Caco-2 (cell line): ENCODE measurements at regions of chr9 and their contacts with region 1.

Region 1: GRCh38 chr9:110058304-110058953 is 149.5 kb downstream of the C9orf152 start:
- DNase-seq: peak; percentile 78 to 79
- H3K4me3 ChIP-seq: no peak overlapping the region
- H3K4me3 Mint-ChIP-seq: no peak overlapping the region
- H3K27ac Mint-ChIP-seq: no peak overlapping the region
- H3K4me1 ChIP-seq: peaks cover 12% of the 10 kb centered on the region; the same call in 1 of the 2 replicates
- H3K4me1 Mint-ChIP-seq: peaks cover 18% of the 10 kb centered on the region
- H3K27me3 ChIP-seq: no peaks in the 10 kb centered on the region
- H3K27me3 Mint-ChIP-seq: no peaks in the 10 kb centered on the region
- CTCF ChIP-seq: peak; percentile 68 to 69

Region 2: DNA sequence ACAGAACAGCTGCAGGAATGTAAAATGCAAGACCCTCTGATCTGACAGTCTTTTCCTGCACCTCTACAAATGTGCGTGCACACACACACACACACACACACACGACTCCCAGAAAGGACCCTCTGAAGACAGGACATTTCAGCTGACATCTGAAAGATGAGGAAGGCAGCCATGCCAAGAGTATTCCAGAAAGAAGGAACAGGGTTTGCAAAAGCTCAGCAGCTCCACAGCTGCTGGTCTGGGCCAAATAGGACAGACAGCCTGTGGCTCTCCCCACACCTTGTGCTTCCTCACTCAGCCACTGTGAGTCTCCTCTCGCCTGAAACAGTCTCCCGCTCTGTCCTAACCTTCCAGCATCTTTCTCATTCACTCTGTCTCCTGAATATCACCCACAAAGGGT is 89.4 kb before region 1 on chr9:
- CTCF ChIA-PET with region 1: interaction called, 7 read pairs
- POLR2A ChIA-PET with region 1: no interaction called
- intact Hi-C with region 1: loop called (anchors 1 kb)
- DNase-seq: peak; percentile 54 to 58
- H3K4me3 ChIP-seq: no peak overlapping the region
- H3K4me3 Mint-ChIP-seq: no peak overlapping the region
- H3K27ac Mint-ChIP-seq: no peak overlapping the region
- H3K4me1 ChIP-seq: no peaks in the 10 kb centered on the region
- H3K4me1 Mint-ChIP-seq: no peaks in the 10 kb centered on the region
- H3K27me3 ChIP-seq: no peaks in the 10 kb centered on the region
- H3K27me3 Mint-ChIP-seq: no peaks in the 10 kb centered on the region
- CTCF ChIP-seq: peak in 1 of 2 experiments; percentile 37

Region 3: DNA sequence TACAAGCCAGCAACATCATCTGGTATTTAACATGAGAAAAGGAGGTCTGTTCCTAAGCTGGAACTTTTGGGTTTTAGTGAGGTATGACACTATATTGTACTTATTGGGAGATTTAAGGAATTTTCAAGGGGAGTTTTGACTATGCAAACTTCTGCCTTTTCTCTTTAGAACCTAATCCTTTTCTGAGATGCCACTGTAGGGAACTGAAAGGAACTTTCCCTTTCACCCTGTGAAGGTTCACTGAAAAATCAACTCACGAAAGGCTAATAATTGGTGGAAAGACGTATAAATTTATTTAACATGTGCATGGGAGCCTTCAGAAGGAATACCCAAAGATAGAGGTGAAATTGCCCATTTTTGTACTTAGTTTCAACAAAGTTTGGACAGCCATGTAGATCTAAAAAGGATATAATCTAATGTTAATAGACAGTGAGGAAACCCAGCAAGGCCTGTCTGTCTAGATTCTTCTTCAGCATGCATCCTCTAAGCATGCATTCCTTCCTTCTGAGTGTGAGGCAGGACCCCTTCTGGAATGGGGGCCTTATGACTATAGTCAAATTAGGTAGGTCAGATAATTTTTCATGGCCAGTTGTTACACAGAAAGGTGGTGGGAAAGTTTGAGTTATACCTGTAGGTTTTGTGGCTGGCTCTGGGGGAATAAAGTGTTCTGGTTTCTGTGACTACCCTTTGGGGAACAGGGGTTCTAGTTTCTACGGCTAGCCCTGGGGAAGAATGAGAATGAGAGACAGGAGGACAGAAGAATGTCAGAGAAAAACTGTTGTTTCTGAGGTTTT is 50.8 kb before region 1 on chr9:
- CTCF ChIA-PET with region 1: no interaction called
- POLR2A ChIA-PET with region 1: no interaction called
- intact Hi-C with region 1: loop called (anchors 2 kb)
- DNase-seq: no peak
- H3K4me3 ChIP-seq: no peak overlapping the region
- H3K4me3 Mint-ChIP-seq: no peak overlapping the region
- H3K27ac Mint-ChIP-seq: no peak overlapping the region
- H3K4me1 ChIP-seq: peaks cover 22% of the 10 kb centered on the region
- H3K4me1 Mint-ChIP-seq: peaks cover 16% of the 10 kb centered on the region
- H3K27me3 ChIP-seq: no peaks in the 10 kb centered on the region
- H3K27me3 Mint-ChIP-seq: no peaks in the 10 kb centered on the region
- CTCF ChIP-seq: no peak

Region 4: DNA sequence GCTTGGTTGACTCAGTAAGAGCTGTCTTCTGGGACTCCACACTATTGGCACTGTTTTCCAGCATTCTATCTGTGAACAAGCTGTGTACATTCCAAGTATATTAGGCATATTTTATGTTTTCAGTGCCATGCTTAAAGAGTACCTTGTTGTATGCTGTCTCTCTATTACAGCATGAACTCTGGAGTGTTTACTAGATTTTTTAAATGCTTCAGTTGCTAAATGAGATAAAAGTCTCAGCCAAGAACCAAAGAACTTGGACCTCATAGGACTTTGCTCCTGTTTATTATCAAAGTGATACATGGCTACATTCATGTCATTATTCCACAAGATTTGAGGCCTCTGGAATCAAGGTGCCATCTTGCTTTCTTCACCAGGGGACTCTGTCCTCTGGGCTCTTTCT is 17.6 kb before region 1 on chr9:
- CTCF ChIA-PET with region 1: no interaction called
- POLR2A ChIA-PET with region 1: no interaction called
- intact Hi-C with region 1: no loop called
- DNase-seq: no peak
- H3K4me3 ChIP-seq: no peak overlapping the region
- H3K4me3 Mint-ChIP-seq: no peak overlapping the region
- H3K27ac Mint-ChIP-seq: no peak overlapping the region
- H3K4me1 ChIP-seq: peaks cover 24% of the 10 kb centered on the region
- H3K4me1 Mint-ChIP-seq: peaks cover 9% of the 10 kb centered on the region
- H3K27me3 ChIP-seq: no peaks in the 10 kb centered on the region
- H3K27me3 Mint-ChIP-seq: no peaks in the 10 kb centered on the region
- CTCF ChIP-seq: no peak